IMR-90 (cell line): ENCODE measurements at regions of chr17 and their contacts with region 1.

Region 1: DNA sequence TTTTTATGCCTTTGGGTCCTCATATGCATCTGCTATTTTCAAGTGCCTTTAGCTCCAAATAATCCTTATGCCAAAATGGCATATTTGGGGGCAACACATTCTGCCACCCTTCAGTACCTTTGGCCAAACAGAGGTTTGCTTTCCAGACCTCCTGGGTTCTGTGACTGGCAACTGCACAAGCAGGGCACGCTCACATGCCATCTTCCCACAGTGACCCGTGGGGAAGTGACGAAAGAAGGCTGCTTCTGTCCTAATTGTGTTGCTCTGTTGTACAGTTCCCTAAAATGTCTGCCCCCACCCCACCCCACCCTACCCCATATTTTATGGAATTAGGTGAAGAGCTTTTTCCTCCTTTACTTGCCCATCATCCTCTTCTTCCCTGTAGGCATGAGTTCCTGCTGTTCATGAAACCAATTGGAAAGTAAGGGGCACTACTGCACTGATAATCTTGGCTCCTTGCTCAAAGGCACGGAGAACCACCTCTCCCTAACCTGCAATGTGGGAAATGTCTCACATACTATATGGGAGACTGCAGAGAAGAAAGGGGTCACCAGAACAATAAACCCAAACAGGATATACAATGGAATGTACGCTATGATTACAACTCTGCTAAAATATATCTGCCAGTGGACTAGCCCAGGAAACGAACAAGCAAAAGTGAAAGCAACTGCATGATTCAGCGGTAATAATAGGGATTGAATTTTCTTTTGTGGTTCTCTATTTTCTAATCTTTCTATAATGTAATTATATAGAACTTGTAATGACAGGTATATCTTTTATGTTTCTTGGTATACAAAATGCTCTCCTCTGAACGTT is 3.3 kb upstream of the SLFN12L start:
- DNase-seq: peak; percentile 51
- ATAC-seq: peak; percentile 78
- H3K4me3 ChIP-seq: peak overlapping the region; percentile 41; the same call in 1 of the 2 replicates
- H3K27ac ChIP-seq: peak overlapping the region; percentile 82; the same call in 1 of the 2 replicates
- H3K4me1 ChIP-seq: no peaks in the 10 kb centered on the region
- H3K27me3 ChIP-seq: no peaks in the 10 kb centered on the region; the same call in 1 of the 2 replicates
- CTCF ChIP-seq: no peak
- POLR2A ChIP-seq: no peak
- RAD21 ChIP-seq: no peak

Region 2: DNA sequence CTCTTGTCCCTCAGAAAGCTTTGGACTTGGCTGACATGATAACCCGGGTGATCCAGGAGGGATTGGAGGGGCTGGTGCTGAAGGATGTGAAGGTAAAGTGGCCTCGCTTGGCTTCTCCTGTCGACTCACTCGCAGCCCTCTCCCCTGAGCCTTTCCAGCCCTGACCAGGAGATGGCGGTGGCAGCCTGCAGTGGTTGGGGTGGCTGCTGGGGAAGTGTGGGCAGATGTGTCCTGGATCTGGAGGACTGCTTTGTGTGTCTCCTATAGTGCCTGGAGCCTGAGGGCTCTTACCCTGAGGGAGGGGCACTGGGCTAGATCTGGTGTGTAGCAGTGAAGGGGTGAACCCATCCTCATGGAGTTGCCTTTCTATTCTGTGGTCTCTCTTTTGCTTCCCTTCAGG is 542.6 kb before region 1 on chr17:
- CTCF ChIA-PET with region 1: no interaction called
- POLR2A ChIA-PET with region 1: no interaction called
- dilution Hi-C with region 1: no loop called
- in situ Hi-C with region 1: no loop called
- intact Hi-C with region 1: loop called (anchors 10 kb)
- DNase-seq: peak; percentile 70
- ATAC-seq: peak; percentile 84
- H3K4me3 ChIP-seq: no peak overlapping the region
- H3K27ac ChIP-seq: peak overlapping the region; percentile 77
- H3K4me1 ChIP-seq: peaks cover 22% of the 10 kb centered on the region
- H3K27me3 ChIP-seq: no peaks in the 10 kb centered on the region
- CTCF ChIP-seq: peak; percentile 89
- POLR2A ChIP-seq: no peak
- RAD21 ChIP-seq: peak; percentile 94

Region 3: DNA sequence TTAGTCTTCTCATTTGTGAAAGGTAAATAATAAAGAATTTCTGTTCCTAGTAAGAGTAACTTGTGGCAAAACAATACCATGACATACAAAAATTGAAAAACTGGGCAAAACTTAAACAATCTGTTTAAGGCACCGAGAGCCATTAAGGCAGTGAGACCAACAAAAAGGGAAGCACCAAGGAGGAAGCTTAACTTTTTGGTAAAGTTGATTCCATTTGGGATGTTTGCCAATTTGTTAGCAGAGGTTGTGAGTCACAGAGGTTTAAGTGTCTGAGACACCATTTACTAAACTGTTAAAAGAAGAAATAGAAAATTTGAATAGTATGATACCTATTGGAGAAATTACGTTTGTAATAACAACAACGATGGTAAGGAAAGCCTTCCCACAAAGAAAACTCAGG is 351.5 kb before region 1 on chr17:
- CTCF ChIA-PET with region 1: no interaction called
- POLR2A ChIA-PET with region 1: no interaction called
- dilution Hi-C with region 1: loop called (anchors 25 kb)
- in situ Hi-C with region 1: no loop called
- intact Hi-C with region 1: no loop called
- DNase-seq: no peak
- ATAC-seq: no peak
- H3K4me3 ChIP-seq: no peak overlapping the region
- H3K27ac ChIP-seq: no peak overlapping the region
- H3K4me1 ChIP-seq: no peaks in the 10 kb centered on the region
- H3K27me3 ChIP-seq: peaks cover 6% of the 10 kb centered on the region
- CTCF ChIP-seq: no peak
- POLR2A ChIP-seq: no peak
- RAD21 ChIP-seq: no peak

Region 4: GRCh38 chr17:35312790-35313711 is 227.7 kb before region 1 on chr17:
- CTCF ChIA-PET with region 1: interaction called, 18 read pairs
- POLR2A ChIA-PET with region 1: interaction called, 3 read pairs
- dilution Hi-C with region 1: loop called (anchors 25 kb)
- in situ Hi-C with region 1: loop called (anchors 5 kb)
- intact Hi-C with region 1: loop called (anchors 1 kb)
- DNase-seq: peak; percentile 73
- ATAC-seq: peak; percentile 94
- H3K4me3 ChIP-seq: no peak overlapping the region
- H3K27ac ChIP-seq: no peak overlapping the region
- H3K4me1 ChIP-seq: peaks cover 3% of the 10 kb centered on the region; the same call in 1 of the 2 replicates
- H3K27me3 ChIP-seq: no peaks in the 10 kb centered on the region
- CTCF ChIP-seq: peak; percentile 80
- POLR2A ChIP-seq: no peak
- RAD21 ChIP-seq: peak; percentile 81

Region 5: DNA sequence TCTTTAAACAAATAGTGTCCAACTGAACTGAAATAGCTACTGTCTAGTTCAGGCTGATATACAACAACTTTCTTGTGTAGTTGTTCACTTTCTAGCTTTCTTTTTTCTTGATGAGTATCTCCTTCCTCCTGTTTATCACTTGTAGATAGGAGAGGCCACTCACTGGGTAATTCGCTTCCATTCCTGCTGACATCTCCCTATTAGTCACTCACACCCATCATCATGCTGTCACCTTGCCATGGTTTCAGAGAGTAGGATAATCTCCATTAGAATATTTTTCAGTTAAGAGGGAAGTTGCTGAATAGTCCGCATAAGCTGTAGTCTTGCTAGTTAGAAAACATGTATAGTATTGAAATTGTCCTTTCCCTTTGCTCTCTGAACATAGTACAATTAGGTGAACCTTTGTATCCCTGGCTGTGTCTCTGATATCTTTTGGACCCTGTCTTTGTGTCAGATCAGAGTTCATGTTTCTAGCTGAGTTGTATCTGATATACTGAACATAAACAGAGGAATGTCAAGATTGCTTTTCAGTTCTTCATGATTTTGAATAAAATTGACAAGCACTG is 126.3 kb after region 1 on chr17:
- CTCF ChIA-PET with region 1: no interaction called
- POLR2A ChIA-PET with region 1: no interaction called
- dilution Hi-C with region 1: no loop called
- in situ Hi-C with region 1: no loop called
- intact Hi-C with region 1: no loop called
- DNase-seq: peak; percentile 42
- ATAC-seq: 0 out of 2 replicates have a peak, but pooled peaks have one; percentile 16
- H3K4me3 ChIP-seq: no peak overlapping the region
- H3K27ac ChIP-seq: no peak overlapping the region
- H3K4me1 ChIP-seq: peaks cover 5% of the 10 kb centered on the region
- H3K27me3 ChIP-seq: no peaks in the 10 kb centered on the region
- CTCF ChIP-seq: no peak
- POLR2A ChIP-seq: no peak
- RAD21 ChIP-seq: no peak